Posterior vena cava (tissue), 2 donors: ENCODE measurements at regions of chr7 and their contacts with region 1.

Region 1: DNA sequence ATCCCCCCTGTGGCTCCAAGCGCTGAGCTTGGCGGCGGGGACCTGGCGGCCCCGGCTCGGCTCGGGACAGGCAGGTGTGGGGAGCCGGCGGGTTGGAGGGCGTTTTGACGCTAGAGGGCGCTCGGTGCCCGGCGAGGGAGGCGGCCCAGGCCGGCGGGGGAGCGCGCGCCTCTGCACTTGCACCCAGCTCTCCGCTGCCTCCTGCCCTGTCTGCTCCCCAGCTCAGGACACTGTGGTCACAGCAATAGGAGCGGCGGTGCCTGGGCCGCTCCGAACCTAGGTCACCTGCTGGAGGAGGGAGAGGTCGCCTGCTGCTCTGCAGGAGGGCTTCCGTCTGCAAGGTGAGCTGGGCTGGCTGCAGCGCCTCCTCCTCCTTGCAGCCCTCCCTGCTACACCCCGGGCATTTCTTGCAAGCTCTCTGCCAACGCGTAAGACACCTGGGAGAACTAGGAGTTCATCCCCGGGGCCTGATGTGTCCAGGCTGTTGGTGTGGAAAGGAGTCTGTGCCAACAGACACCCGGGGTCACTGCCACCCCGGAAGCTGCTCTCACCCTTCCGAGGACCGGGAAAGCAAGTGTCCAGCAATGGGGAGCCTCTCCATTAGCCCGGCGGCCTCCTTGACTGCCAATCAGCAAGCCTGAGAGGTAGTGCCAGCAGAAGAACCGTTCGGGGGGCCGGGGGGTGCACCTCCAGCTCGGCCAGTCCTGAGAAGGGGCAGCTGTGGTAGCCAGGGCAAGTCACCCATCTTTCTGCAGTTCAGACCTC is 620.4 kb downstream of the GALNT17 start:
- DNase-seq: no peak

Region 2: DNA sequence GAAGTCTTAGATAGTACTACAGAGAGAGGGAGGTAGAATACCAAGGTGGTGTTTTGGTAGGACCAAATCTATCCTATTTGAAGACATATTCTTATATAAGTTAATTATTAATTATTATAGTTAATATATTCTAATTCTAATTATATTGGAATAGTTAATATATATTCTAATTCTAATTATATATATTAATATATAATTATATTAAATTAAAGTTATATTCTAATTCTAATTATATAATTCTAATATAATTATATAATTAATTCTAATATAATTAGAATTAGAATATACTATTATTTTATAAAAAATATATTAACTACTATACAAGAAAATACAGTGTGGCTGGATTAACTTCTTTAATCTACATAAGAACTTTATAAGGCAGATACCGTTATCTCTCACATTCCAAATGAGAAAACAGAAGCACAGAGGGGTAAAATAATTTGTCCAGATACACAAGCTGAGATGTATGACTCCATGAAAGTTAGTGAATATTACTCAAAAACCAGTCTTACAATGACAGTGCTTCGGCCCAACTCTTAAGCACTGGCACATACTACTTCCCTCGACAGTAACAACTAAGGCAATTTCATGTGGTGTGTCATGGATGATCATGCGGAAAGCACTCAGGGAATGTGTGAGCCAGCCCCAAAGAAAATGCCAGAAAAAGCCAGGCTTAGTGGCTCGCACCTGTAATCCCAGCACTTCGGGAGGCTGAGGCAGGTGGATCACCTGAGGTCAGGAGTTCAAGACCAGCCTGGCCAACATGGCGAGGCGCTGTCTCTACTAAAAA is 1033.0 kb after region 1 on chr7:
- intact Hi-C with region 1: loop called in 1 of 2 experiments (anchors 10 kb)
- DNase-seq: no peak